ENCODE measurements at regions of chr12 and their contacts with region 1.

Region 1: GRCh38 chr12:113030875-113031525 is 25.5 kb upstream of the DTX1 start:
- DNase-seq: peak; percentile 34 to 51
- H3K4me3 ChIP-seq: no peak overlapping the region
- H3K27ac ChIP-seq: no peak overlapping the region
- H3K4me1 ChIP-seq: peaks cover 0 to 4% (median 2%) of the 10 kb centered on the region in 4 experiments; a peak in 4 of 7 replicates
- H3K27me3 ChIP-seq: no peaks in the 10 kb centered on the region
- CTCF ChIP-seq: peak; percentile 54 to 84 (median 65)
- EP300 ChIP-seq: no peak
- POLR2A ChIP-seq: no peak
- RAD21 ChIP-seq: peak; percentile 67 to 77

Region 2: DNA sequence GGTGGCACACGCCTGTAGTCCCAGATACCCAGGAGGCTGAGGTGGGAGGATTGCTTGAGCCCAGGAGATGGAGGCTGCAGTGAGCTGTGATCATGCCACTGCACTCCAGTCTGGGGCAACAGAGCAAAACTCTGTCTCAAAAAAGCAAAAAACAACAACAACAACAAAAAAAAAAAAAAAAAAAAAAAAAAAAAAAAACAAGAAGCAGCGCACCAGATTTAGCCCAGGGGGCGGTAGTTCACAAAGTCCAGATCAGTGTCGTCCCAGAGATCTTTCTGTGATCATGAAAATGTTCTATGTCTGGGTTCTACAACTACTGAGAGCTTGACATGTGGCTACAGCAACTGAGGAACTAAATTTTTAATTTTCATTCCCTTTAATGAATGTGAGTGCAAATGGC is 25.2 kb before region 1 on chr12:
- CTCF ChIA-PET with region 1: interaction called, 17 read pairs
- POLR2A ChIA-PET with region 1: no interaction called
- DNase-seq: no peak
- H3K4me3 ChIP-seq: no peak overlapping the region
- H3K27ac ChIP-seq: no peak overlapping the region
- H3K4me1 ChIP-seq: no peaks in the 10 kb centered on the region
- H3K27me3 ChIP-seq: peaks cover 0 to 7% (median 0%) of the 10 kb centered on the region in 4 experiments; a peak in 1 of 7 replicates
- CTCF ChIP-seq: peak in 2 of 3 experiments; percentile 48 to 55; a peak in 2 of 4 replicates
- EP300 ChIP-seq: no peak
- POLR2A ChIP-seq: no peak
- RAD21 ChIP-seq: peak; percentile 28 to 39; a peak in 3 of 4 replicates

Region 3: GRCh38 chr12:113019041-113019440 is 12.0 kb before region 1 on chr12:
- CTCF ChIA-PET with region 1: interaction called, 20 read pairs
- POLR2A ChIA-PET with region 1: no interaction called
- DNase-seq: no peak
- H3K4me3 ChIP-seq: no peak overlapping the region
- H3K27ac ChIP-seq: no peak overlapping the region
- H3K4me1 ChIP-seq: no peaks in the 10 kb centered on the region
- H3K27me3 ChIP-seq: no peaks in the 10 kb centered on the region; a peak in 1 of 7 replicates
- CTCF ChIP-seq: no peak
- EP300 ChIP-seq: no peak
- POLR2A ChIP-seq: no peak
- RAD21 ChIP-seq: no peak

Region 4: DNA sequence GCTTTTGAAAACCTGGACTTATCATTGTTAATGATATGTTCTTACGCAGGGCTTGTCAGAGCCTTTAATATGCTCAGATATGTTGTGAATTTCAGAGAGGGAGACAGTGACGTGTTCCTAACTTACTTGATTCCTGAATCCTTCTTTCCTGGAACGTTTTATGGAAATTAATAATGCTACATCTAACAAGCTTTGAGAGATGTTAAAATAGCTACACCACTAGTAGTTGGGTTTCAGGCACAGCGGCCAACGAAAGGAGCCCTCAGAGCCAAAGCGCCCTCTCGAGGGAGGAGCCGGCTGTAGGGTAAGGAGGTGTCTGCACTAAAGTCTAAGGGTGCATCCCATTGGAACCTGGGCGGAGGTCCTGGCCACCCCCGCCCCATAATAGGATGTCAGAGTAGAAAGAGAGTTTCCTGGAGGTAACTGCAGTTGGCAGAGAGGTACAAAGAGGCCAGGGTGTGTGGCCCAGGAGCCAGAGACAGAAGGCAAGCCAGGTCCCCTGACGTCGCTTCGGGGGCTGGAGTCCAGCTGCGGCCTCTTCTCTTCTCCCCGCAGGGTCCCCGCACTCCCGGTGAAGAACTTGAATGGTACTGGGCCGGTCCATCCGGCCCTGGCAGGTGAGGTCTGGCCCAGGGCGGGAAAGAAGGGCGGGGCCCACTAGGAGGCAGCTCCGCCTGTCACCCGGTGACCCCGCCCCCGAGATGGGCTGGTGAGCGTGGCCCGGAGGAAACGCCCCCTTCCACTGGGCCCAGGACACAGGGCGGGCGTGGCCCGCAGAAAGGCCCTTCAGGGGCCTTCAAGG is 61.8 kb after region 1 on chr12:
- CTCF ChIA-PET with region 1: interaction called, 11 read pairs
- POLR2A ChIA-PET with region 1: no interaction called
- DNase-seq: peak in 1 of 2 experiments; percentile 92
- H3K4me3 ChIP-seq: peak overlapping the region; percentile 39 to 64 (median 44)
- H3K27ac ChIP-seq: no peak overlapping the region
- H3K4me1 ChIP-seq: peaks cover 0 to 8% (median 3%) of the 10 kb centered on the region in 4 experiments; a peak in 5 of 7 replicates
- H3K27me3 ChIP-seq: no peaks in the 10 kb centered on the region
- CTCF ChIP-seq: peak; percentile 34 to 58 (median 57); a peak in 3 of 4 replicates
- EP300 ChIP-seq: no peak
- POLR2A ChIP-seq: 0 out of 3 replicates have a peak, but pooled peaks of 1 of the 2 experiments have one; percentile 28
- RAD21 ChIP-seq: peak; percentile 41 to 56

Region 5: DNA sequence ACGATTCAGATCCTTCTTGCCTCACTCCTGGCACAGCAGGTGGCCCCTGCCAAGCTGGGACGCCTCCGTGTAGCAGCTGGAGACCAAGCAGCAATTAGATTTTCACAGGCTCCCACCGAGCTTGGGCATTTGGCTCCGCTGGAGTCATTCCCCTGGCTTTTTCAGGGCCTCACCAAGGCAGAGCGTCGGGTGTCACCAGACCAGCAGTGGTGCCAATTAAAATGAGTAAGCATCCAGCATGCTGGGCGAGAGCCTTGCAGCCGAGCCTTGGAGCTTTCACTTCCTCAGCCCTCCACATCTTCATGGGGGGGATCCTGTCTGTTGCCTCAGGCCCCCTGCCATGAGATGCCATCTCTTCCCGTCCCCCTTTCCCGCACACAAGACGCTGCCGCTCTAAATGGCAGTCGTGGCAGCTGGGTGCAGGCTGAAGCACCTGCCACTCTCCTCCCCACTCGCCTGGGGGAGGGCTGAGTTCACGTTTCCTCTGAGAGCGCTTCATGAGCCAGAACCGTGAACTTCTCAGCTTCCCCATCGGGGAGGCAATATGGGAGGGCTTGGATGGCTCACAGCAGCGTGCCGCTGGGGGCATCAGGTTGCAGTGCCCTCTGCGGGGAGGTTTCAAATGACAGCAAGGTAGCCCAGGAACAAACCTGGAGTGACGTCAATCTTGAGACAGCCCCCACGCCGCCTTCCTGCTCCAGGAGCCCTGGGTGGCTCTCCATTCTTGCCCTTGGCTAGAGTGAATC is 202.0 kb after region 1 on chr12:
- CTCF ChIA-PET with region 1: no interaction called
- POLR2A ChIA-PET with region 1: no interaction called
- DNase-seq: peak in 1 of 2 experiments; percentile 72
- H3K4me3 ChIP-seq: peak overlapping the region in 2 of 4 experiments; percentile 1 to 29; a peak in 2 of 8 replicates
- H3K27ac ChIP-seq: peak overlapping the region; percentile 63; the same call in 1 of the 2 replicates
- H3K4me1 ChIP-seq: peaks cover 9 to 20% (median 20%) of the 10 kb centered on the region in 4 experiments
- H3K27me3 ChIP-seq: no peaks in the 10 kb centered on the region; a peak in 1 of 7 replicates
- CTCF ChIP-seq: peak; percentile 33 to 47 (median 45)
- EP300 ChIP-seq: no peak
- POLR2A ChIP-seq: no peak
- RAD21 ChIP-seq: peak; percentile 37 to 41

Region 6: GRCh38 chr12:113247123-113248055 is 216.4 kb after region 1 on chr12:
- CTCF ChIA-PET with region 1: no interaction called
- POLR2A ChIA-PET with region 1: no interaction called
- DNase-seq: no peak
- H3K4me3 ChIP-seq: no peak overlapping the region
- H3K27ac ChIP-seq: no peak overlapping the region
- H3K4me1 ChIP-seq: peaks cover 14 to 34% (median 18%) of the 10 kb centered on the region in 4 experiments
- H3K27me3 ChIP-seq: no peaks in the 10 kb centered on the region
- CTCF ChIP-seq: no peak
- EP300 ChIP-seq: no peak
- POLR2A ChIP-seq: peak in 1 of 2 experiments; percentile 31; a peak in 1 of 3 replicates
- RAD21 ChIP-seq: no peak

Region 7: DNA sequence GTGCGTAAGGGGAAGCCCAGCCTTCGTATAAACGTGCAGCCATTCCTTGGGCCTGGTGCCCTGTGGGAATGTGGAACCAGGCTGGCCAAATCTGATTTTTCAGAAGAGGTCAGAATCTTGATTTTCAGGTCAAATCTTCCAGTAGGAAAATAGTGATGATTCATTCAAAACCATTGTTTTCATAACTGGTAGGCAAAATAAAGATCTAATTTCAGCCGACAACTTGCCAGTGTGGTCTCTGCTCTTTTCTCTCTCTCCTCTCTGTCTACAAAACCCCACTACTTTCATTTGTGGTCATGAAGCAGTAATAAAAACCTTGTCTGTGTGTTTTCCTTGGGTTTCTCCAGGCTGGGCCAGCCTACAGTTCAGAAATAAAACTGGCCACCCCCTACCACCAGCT is 800.0 kb after region 1 on chr12:
- CTCF ChIA-PET with region 1: no interaction called
- POLR2A ChIA-PET with region 1: no interaction called
- DNase-seq: no peak
- H3K4me3 ChIP-seq: no peak overlapping the region
- H3K27ac ChIP-seq: no peak overlapping the region
- H3K4me1 ChIP-seq: peaks cover 0 to under 1% (median 0%) of the 10 kb centered on the region in 4 experiments; a peak in 1 of 7 replicates
- H3K27me3 ChIP-seq: no peaks in the 10 kb centered on the region
- CTCF ChIP-seq: no peak
- EP300 ChIP-seq: no peak
- POLR2A ChIP-seq: no peak
- RAD21 ChIP-seq: no peak

Measured in H1 (cell line).